Panc1 (cell line): ENCODE measurements at regions of chr5 and their contacts with region 1.

Region 1: DNA sequence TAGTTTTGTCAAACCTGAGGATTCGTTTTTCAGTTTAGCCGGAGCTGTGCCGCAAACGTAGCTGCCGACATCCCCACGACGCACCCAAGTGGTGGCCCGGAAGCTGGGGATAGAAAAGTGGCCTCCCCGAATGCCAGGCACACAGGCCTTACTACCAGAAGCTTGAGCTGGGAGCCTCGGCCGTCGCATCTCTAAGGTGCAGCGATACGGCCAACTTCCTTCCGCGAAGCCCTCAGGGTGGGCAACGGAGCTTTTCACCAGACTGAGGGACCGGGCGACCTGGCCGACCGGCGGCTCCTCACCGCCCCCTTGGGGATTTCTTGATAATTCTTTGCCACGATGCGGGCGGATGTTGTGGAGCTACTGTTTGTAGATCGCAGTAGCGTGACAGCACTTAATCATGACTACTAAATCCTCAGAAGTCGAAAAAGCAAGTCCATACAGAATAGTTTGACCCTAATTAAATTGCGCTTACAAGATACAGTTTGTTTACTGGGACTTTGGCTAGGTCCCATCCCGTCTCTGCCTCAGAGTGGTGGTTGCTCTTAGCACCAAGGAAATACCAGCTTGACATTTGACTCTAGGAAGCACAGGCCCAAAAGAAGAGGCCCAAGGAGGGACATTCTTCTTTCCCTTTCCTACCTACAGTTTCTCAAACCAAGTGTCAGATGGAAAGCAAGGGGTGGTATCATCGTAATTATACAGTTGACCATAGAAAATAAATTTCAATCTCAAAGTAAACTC is 613 bp upstream of the TMEM267 start:
- DNase-seq: peak; percentile 88
- ATAC-seq: peak; percentile 88
- H3K4me3 ChIP-seq: peak overlapping the region; percentile 94 to 95
- H3K27ac ChIP-seq: peak overlapping the region; percentile 96
- H3K4me1 ChIP-seq: peaks cover 9% of the 10 kb centered on the region
- H3K27me3 ChIP-seq: no peaks in the 10 kb centered on the region
- CTCF ChIP-seq: peak; percentile 93

Region 2: DNA sequence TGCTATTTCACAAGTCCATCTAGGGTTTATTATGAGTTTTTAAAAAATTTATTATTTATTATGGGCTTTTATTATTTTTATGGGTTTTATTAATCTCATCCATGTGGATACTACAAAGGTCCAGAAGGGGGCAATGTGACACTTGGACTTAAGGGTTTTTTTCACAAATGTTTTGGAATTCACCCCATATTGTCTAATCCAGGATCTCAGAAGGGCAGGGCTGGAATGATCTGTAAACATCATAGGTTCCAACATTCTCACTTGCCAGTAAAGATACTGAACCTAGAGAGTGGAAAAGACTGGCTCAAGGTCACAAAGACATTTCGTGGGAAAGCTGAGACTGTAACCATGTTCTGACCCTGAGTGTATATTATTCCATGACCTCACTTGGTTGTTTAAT is 256.6 kb before region 1 on chr5:
- CTCF ChIA-PET with region 1: interaction called, 5 read pairs
- POLR2A ChIA-PET with region 1: interaction called, 13 read pairs
- in situ Hi-C with region 1: no loop called
- intact Hi-C with region 1: no loop called
- DNase-seq: no peak
- ATAC-seq: no peak; the same call in 1 of the 2 replicates
- H3K4me3 ChIP-seq: no peak overlapping the region
- H3K27ac ChIP-seq: no peak overlapping the region
- H3K4me1 ChIP-seq: no peaks in the 10 kb centered on the region
- H3K27me3 ChIP-seq: no peaks in the 10 kb centered on the region
- CTCF ChIP-seq: peak; percentile 68

Region 3: DNA sequence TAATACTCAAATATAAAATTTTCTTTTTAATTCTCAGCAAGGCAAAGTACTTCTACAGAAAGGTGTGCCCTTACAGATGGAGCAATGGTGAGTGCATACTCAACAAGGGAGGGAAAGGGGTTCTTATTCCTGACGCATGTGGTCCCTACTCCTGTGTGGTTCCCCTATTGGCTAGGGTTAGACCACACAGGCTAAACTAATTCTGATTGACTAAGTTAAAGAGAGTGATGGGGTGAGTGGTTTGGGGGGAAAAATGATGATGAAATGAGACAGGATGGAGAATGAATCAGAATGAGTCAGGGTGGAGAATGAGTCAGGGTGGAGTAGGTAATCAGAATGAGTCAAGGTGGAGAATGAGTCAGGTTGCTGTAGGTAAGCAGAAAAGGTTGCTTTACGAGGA is 148.1 kb before region 1 on chr5:
- CTCF ChIA-PET with region 1: no interaction called
- POLR2A ChIA-PET with region 1: interaction called, 14 read pairs
- in situ Hi-C with region 1: no loop called
- intact Hi-C with region 1: no loop called
- DNase-seq: no peak
- ATAC-seq: no peak
- H3K4me3 ChIP-seq: no peak overlapping the region
- H3K27ac ChIP-seq: no peak overlapping the region
- H3K4me1 ChIP-seq: no peaks in the 10 kb centered on the region
- H3K27me3 ChIP-seq: no peaks in the 10 kb centered on the region
- CTCF ChIP-seq: no peak

Region 4: DNA sequence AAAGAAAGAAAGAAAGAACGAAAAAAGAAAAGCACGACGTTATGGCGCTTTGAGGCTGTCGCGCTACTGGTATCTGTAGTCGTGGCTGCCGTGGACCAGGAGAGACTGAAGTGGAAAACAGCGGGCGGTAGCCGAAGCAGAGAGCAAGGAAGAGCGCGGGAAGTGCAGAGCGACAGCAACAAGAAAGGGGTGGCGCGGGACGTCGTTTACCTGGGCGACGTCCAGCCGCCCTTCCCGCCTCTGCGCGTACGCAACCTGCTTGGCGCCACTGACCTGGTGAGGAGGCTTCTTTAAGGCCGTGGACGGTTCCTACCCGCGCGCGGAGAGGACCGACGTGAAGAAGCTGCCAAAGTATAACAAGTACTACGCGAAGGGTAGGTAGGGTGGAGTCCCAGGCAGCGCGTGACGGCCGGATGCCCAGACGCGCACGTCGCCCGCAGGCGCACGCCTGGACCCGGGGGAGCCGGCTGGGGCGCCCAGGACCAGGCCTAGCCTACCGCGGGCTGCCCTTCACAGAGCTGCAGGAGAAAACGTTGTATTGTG is 87.4 kb before region 1 on chr5:
- CTCF ChIA-PET with region 1: interaction called, 8 read pairs
- POLR2A ChIA-PET with region 1: interaction called, 5 read pairs
- in situ Hi-C with region 1: no loop called
- intact Hi-C with region 1: loop called (anchors 5 kb)
- DNase-seq: no peak
- ATAC-seq: peak; percentile 93
- H3K4me3 ChIP-seq: peak overlapping the region; percentile 47 to 48
- H3K27ac ChIP-seq: peak overlapping the region; percentile 58
- H3K4me1 ChIP-seq: no peaks in the 10 kb centered on the region
- H3K27me3 ChIP-seq: no peaks in the 10 kb centered on the region
- CTCF ChIP-seq: no peak

Region 5: GRCh38 chr5:43409809-43410271 is 74.4 kb before region 1 on chr5:
- CTCF ChIA-PET with region 1: interaction called, 14 read pairs
- POLR2A ChIA-PET with region 1: no interaction called
- in situ Hi-C with region 1: no loop called
- intact Hi-C with region 1: no loop called
- DNase-seq: no peak
- ATAC-seq: no peak
- H3K4me3 ChIP-seq: no peak overlapping the region
- H3K27ac ChIP-seq: no peak overlapping the region
- H3K4me1 ChIP-seq: no peaks in the 10 kb centered on the region; the same call in 1 of the 2 replicates
- H3K27me3 ChIP-seq: no peaks in the 10 kb centered on the region
- CTCF ChIP-seq: no peak

Region 6: DNA sequence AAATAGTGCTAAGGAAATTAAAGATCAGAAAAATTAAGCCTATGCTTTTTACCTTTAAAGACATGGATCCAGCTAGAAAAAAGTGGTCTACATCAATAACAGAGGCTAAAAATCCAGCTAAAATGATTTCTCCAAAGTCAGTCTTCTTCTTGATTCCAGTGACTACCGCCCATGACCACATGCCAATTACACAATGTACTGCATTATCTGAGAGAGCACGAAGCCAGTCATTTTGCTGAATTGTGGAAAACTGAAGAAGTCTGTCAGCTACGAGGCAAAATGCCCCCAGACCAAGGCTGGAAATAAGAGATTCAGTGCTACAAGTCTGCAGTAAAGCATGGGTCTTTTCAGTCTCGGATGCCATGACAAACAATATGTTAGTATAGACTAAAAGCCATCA is 30.7 kb before region 1 on chr5:
- CTCF ChIA-PET with region 1: no interaction called
- POLR2A ChIA-PET with region 1: no interaction called
- in situ Hi-C with region 1: no loop called
- intact Hi-C with region 1: no loop called
- DNase-seq: no peak
- ATAC-seq: no peak
- H3K4me3 ChIP-seq: no peak overlapping the region
- H3K27ac ChIP-seq: no peak overlapping the region
- H3K4me1 ChIP-seq: no peaks in the 10 kb centered on the region
- H3K27me3 ChIP-seq: no peaks in the 10 kb centered on the region
- CTCF ChIP-seq: no peak

Region 7: GRCh38 chr5:43497311-43498104 is 13.2 kb after region 1 on chr5:
- CTCF ChIA-PET with region 1: no interaction called
- POLR2A ChIA-PET with region 1: interaction called, 13 read pairs
- in situ Hi-C with region 1: no loop called
- intact Hi-C with region 1: no loop called
- DNase-seq: no peak
- ATAC-seq: no peak
- H3K4me3 ChIP-seq: no peak overlapping the region
- H3K27ac ChIP-seq: no peak overlapping the region
- H3K4me1 ChIP-seq: no peaks in the 10 kb centered on the region
- H3K27me3 ChIP-seq: no peaks in the 10 kb centered on the region
- CTCF ChIP-seq: no peak

Region 8: DNA sequence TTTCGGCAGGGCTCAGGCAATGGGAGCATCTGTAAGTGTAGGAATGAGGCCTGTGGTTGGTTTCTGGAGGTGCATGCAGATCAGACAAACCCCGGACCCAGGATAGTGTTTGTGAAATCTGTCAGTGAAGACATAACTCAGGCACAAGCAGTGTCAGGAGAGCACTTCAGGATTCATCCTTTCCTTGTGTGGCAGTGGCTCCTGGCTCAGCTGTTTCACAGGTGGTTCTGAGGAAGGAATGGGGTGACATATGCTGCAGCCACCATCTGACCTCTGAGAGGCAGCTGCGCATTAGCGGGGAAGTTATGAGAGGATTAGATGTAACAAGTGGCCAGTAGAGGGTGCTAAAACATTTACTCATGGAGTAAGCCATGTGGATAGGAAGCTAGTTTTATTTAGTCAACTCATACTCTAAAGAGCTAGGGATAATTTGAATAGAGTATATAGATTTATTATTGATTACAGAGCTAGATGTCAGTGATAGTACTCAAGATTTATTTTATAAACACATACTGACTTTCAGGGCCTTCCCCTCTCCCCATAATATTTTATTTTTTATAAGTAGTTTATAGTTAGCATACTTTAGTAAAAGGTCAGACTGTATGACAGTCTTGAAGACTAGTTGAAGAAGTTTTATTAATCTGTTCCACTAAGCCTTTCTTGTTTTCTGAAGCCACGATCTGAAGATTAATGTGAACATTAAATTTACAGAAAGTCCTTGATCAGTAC is 147.1 kb after region 1 on chr5:
- CTCF ChIA-PET with region 1: no interaction called
- POLR2A ChIA-PET with region 1: interaction called, 19 read pairs
- in situ Hi-C with region 1: no loop called
- intact Hi-C with region 1: no loop called
- DNase-seq: peak; percentile 25
- ATAC-seq: peak; percentile 97
- H3K4me3 ChIP-seq: no peak overlapping the region
- H3K27ac ChIP-seq: no peak overlapping the region
- H3K4me1 ChIP-seq: no peaks in the 10 kb centered on the region
- H3K27me3 ChIP-seq: no peaks in the 10 kb centered on the region
- CTCF ChIP-seq: peak; percentile 83